ENCODE measurements at regions of chr15 and their contacts with region 1.

Region 1: GRCh38 chr15:100918034-100918689 is 995 bp upstream of the LRRK1 start:
- DNase-seq: peak; percentile 90
- CTCF ChIP-seq: peak; percentile 99

Region 2: GRCh38 chr15:100785181-100786134 is 132.7 kb before region 1 on chr15:
- CTCF ChIA-PET with region 1: no interaction called
- POLR2A ChIA-PET with region 1: no interaction called
- DNase-seq: no peak
- CTCF ChIP-seq: no peak

Region 3: DNA sequence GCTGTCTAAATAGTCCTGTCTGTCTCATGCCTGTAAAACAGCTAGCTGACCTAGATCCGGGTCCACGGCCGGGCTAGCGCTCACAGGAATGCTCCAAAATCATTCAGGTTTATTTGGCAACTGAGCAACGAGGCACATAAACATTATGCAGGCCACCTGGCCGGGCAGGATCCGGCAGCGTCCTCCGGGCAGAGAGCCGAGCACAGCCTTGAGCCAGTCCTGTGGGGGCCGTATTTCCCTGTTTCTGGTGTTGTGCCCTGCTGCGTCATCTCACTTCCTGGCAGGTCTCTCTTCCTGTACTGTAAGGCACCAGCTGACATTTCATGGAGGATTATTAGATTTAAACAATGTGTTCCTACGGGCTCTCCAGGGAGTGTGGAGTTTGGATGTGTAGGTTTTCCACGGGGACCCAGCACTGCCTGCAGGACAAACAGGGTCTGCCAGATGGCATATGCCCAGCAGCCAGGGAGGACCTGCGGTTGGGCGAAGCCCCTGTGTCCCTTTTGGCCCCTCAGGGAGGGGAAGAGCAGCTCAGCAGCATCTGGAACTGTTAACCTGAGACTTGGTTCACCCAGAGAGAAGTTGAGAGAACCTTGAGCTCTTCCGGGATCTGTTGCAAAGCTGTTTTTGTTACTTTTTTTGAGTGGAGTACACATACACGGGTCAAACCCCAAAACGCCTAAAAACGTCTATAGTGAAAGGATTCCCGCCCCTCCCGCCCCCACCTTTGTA is 15.6 kb before region 1 on chr15:
- CTCF ChIA-PET with region 1: interaction called, 32 read pairs
- POLR2A ChIA-PET with region 1: no interaction called
- DNase-seq: no peak
- CTCF ChIP-seq: no peak

Region 4: DNA sequence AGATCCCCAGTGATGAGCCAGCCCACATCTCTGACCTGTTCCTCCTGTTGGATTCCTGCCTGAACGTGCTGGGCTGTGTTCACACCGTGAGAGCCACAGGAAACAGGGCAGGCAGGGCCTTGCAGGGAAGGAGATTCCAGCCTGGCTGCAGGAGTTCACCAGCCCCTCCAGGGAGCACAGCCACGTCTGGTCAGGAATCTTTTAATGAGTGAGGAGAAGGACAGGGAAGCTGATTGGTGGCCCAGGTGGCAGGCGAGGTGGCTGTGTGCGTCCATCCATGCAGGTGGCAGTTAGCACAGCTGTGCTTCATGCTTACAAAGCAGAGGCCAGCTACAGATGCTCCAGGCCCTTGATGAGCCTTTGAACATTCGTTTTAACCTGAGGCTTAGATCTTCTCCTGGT is 11.5 kb after region 1 on chr15:
- CTCF ChIA-PET with region 1: interaction called, 55 read pairs
- POLR2A ChIA-PET with region 1: interaction called, 3 read pairs
- DNase-seq: peak; percentile 49
- CTCF ChIP-seq: no peak

Region 5: DNA sequence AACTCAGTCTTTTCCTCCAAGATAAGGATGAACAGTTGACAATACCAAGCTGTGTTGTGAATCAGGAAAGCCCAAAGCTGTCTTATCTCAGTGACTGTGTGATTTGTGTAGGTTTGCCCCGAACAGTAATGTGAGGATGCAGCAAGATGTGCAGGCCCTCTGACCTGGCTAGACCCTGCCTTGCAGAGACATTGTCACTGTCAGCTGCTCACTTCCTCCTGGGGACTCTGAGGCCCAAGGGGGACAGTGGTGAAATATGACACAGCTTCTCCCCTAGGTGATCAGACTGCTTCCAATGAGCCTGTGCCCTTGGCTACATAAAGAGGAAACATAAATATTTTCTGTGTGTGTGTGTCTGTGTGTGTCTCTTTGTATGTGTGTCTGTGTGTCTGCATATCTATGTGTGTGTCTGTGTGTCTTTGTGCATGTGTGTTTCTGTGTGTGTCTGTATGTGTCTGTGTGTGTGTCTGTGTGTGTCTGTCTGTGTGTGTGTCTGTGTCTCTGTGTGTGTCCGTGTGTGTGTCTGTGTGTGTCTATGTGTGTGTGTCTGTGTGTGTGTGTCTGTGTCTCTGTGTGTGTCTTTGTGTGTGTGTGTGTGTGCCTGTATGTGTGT is 22.7 kb after region 1 on chr15:
- CTCF ChIA-PET with region 1: interaction called, 39 read pairs
- POLR2A ChIA-PET with region 1: interaction called, 3 read pairs
- DNase-seq: peak; percentile 64
- CTCF ChIP-seq: no peak

Region 6: DNA sequence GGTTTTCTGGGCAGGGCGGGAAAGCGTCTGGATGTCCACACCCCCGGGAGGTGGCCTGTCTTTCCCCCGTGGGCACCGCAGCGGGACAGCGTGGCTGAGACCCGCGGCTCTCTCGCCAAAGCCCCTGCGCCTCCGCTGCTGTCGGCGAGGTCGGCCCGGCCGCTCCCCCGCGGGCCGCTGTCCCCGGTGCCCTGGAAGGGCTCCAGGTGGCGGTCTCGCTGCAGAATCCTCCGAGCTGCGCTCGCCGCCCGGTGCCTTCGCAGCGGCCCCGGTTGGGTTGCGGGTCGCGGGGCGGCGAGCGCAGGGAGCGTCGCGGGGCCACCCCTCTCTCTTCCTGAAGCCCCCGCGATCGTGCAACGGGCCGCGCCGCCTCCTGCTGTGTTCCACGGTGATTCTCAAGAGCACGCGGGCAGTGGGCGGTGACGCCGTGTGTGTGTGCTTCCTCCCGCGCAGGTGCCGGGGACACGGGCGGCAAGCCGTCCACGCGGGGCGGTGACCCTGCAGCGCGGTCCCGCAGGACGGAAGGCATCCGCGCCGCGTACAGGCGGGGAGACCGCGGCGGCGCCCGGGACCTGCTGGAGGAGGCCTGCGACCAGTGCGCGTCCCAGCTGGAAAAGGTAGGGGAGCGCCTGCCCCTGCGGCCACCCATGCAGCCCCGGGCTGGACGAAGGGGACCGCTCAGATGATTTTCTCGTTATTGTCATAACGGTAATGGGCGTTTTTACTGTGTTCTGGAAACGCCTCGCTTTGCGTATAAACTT is 55.4 kb after region 1 on chr15:
- CTCF ChIA-PET with region 1: interaction called, 10 read pairs
- POLR2A ChIA-PET with region 1: no interaction called
- DNase-seq: peak; percentile 43
- CTCF ChIP-seq: no peak

Region 7: DNA sequence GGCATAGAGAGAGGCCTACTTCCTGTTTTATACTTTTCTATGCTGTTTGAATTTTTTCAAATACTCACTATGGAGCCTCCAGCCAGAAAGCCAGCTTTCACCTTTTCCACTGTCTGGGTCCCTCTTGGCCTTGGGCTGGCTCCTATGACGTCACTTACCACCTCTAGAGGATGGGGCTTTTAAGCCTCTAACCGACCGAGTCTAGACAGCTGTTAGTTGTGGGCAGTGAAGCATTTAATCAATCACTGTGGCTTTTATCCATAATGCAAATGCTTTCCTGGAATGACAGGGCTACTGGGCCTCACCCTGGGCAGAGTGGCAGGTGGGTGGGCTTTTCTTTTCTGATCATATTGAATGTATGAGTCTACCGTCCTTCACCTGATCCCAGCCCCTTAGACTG is 62.9 kb after region 1 on chr15:
- CTCF ChIA-PET with region 1: interaction called, 16 read pairs
- POLR2A ChIA-PET with region 1: no interaction called
- DNase-seq: no peak
- CTCF ChIP-seq: no peak

Region 8: GRCh38 chr15:101014921-101015841 is 97.0 kb after region 1 on chr15:
- CTCF ChIA-PET with region 1: interaction called, 550 read pairs
- POLR2A ChIA-PET with region 1: no interaction called
- DNase-seq: peak; percentile 79
- CTCF ChIP-seq: peak; percentile 87

Region 9: GRCh38 chr15:101121511-101122090 is 203.4 kb after region 1 on chr15:
- CTCF ChIA-PET with region 1: no interaction called
- POLR2A ChIA-PET with region 1: no interaction called
- DNase-seq: peak; percentile 74
- CTCF ChIP-seq: peak; percentile 65

Measured in GM10248 (cell line).